CD4-positive, alpha-beta memory T cell (primary cell): ENCODE measurements at regions of chr5 and their contacts with region 1.

Region 1: DNA sequence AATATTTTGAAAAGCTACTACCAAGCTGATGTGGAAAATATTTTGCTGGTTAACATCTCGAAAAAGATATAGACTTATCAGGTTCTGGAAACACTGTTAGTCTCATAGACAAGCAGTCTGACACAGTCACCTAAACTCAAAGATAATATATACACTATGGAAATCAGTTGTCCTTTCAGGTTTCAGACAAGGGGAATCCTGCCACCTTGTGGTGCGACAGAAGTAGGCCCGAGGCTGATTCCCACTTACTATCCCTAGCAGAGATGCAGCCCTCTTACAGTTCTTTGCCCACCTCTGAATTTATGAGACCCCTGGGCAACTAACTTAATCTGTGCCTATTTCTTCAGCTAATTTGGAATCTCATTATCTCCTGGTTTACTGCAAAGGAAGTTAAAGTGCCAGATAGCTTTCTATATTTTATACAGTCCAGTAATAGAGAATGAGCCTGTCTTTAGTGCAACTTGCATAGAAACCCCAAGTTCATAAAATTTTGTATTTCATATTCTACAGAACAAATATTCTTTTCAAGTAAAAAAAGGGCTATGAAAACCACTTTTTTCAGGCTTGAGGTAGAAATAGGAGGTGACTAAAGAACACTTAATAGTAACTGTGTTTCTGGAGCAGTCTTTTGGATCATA is 16.9 kb downstream of the RAD1 start:
- DNase-seq: peak; percentile 49 to 57 (median 52)
- H3K4me3 ChIP-seq: no peak overlapping the region
- H3K4me3 Mint-ChIP-seq: no peak overlapping the region
- H3K27ac ChIP-seq: no peak overlapping the region
- H3K27ac Mint-ChIP-seq: no peak overlapping the region
- H3K4me1 ChIP-seq: no peaks in the 10 kb centered on the region
- H3K4me1 Mint-ChIP-seq: no peaks in the 10 kb centered on the region
- H3K27me3 ChIP-seq: no peaks in the 10 kb centered on the region
- H3K27me3 Mint-ChIP-seq: no peaks in the 10 kb centered on the region

Region 2: GRCh38 chr5:34452170-34452830 is 446.1 kb before region 1 on chr5:
- CTCF ChIA-PET with region 1: no interaction called
- POLR2A ChIA-PET with region 1: no interaction called
- intact Hi-C with region 1: no loop called
- DNase-seq: no peak
- H3K4me3 ChIP-seq: no peak overlapping the region
- H3K4me3 Mint-ChIP-seq: no peak overlapping the region
- H3K27ac ChIP-seq: no peak overlapping the region
- H3K27ac Mint-ChIP-seq: no peak overlapping the region
- H3K4me1 ChIP-seq: no peaks in the 10 kb centered on the region
- H3K4me1 Mint-ChIP-seq: no peaks in the 10 kb centered on the region
- H3K27me3 ChIP-seq: no peaks in the 10 kb centered on the region
- H3K27me3 Mint-ChIP-seq: peaks cover 16 to 19% of the 10 kb centered on the region in 2 donors

Region 3: GRCh38 chr5:34474573-34475021 is 423.8 kb before region 1 on chr5:
- CTCF ChIA-PET with region 1: interaction called, 15 read pairs
- POLR2A ChIA-PET with region 1: no interaction called
- intact Hi-C with region 1: loop called (anchors 1 kb)
- DNase-seq: peak in 4 of 5 donors; percentile 15 to 28 (median 24)
- H3K4me3 ChIP-seq: no peak overlapping the region
- H3K4me3 Mint-ChIP-seq: no peak overlapping the region
- H3K27ac ChIP-seq: no peak overlapping the region
- H3K27ac Mint-ChIP-seq: no peak overlapping the region
- H3K4me1 ChIP-seq: no peaks in the 10 kb centered on the region
- H3K4me1 Mint-ChIP-seq: peaks cover 0 to 2% (median 0%) of the 10 kb centered on the region in 4 donors
- H3K27me3 ChIP-seq: no peaks in the 10 kb centered on the region
- H3K27me3 Mint-ChIP-seq: peaks cover 7 to 13% of the 10 kb centered on the region in 2 donors

Region 4: DNA sequence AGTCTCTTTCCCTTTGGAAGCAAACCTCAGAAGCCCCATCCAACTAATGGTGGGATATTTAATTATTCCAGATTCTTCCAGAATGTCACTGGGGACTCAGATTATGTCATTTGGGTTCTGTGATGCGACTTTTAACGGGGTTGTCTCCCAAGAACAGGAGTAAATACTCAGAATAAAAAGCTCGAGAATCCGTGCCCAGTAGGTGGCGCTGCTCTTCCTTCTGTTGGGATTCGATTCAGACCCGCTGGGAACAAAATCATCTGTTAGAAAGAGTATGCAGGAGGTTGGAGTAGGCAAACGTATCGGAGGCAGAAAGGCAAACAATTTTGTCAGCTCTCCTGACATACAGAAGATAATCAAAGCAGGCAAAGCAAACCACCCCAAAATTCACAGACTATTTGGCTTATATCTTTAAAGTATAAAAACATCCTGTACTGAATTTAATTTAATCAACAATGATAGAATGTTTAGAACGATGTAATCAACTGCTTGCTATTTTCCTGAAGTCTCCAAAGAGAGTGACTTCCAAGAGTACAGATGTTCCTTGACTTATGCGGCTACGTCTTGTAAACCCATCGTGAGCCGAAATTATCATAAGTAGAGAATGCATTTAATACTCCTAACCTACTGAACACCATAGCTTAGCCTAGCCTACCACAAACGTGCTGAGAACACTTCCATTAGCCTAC is 412.1 kb before region 1 on chr5:
- CTCF ChIA-PET with region 1: interaction called, 34 read pairs
- POLR2A ChIA-PET with region 1: no interaction called
- intact Hi-C with region 1: loop called (anchors 1 kb)
- DNase-seq: peak in 4 of 5 donors; percentile 34 to 47 (median 42)
- H3K4me3 ChIP-seq: no peak overlapping the region
- H3K4me3 Mint-ChIP-seq: no peak overlapping the region
- H3K27ac ChIP-seq: no peak overlapping the region
- H3K27ac Mint-ChIP-seq: no peak overlapping the region
- H3K4me1 ChIP-seq: no peaks in the 10 kb centered on the region
- H3K4me1 Mint-ChIP-seq: peaks cover 3 to 5% (median 4%) of the 10 kb centered on the region in 4 donors
- H3K27me3 ChIP-seq: no peaks in the 10 kb centered on the region
- H3K27me3 Mint-ChIP-seq: peaks cover 17 to 30% of the 10 kb centered on the region in 2 donors

Region 5: DNA sequence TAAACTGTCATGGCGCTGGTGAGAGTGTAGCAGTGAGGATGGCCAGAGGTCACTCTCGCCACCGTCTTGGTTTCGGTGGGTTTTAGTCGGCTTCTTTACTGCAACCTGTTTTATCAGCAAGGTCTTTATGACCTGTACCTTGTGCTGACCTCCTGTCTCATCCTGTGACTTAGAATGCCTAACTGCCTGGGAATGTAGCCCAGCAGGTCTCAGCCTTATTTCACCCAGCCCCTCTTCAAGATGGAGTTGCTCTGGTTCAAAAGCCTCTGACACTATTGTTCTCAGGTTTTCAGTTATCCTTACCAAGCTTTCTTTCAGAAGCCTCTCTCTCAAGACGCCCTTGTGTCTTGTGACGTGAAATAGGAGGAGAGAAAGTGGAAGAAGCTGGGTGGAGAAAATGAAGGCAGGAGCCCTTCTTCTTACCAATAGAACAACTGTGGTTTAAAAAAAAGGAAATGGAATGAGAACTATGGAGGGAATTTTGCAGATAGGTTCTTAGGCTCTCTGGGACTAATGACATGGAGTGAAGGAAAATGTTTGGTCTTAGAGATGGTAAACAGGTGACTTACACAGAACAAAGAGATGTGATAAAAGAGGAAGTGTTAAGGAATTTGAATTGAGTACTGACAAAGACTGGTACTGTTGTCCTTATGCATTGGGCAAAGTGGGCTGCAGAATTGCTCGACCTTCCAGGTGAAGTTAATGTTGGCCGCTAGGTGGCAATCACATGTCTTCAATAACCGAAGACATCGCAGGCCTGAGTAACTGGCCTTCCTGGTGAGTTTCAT is 375.6 kb before region 1 on chr5:
- CTCF ChIA-PET with region 1: interaction called, 220 read pairs
- POLR2A ChIA-PET with region 1: interaction called, 3 read pairs
- intact Hi-C with region 1: no loop called
- DNase-seq: peak; percentile 33 to 50 (median 41)
- H3K4me3 ChIP-seq: no peak overlapping the region
- H3K4me3 Mint-ChIP-seq: no peak overlapping the region
- H3K27ac ChIP-seq: no peak overlapping the region
- H3K27ac Mint-ChIP-seq: no peak overlapping the region
- H3K4me1 ChIP-seq: no peaks in the 10 kb centered on the region
- H3K4me1 Mint-ChIP-seq: peaks cover 0 to 1% (median 0%) of the 10 kb centered on the region in 4 donors
- H3K27me3 ChIP-seq: no peaks in the 10 kb centered on the region
- H3K27me3 Mint-ChIP-seq: peaks cover 2 to 7% of the 10 kb centered on the region in 2 donors

Region 6: GRCh38 chr5:34886392-34887119 is 11.8 kb before region 1 on chr5:
- CTCF ChIA-PET with region 1: interaction called, 10 read pairs
- POLR2A ChIA-PET with region 1: no interaction called
- intact Hi-C with region 1: no loop called
- DNase-seq: no peak
- H3K4me3 ChIP-seq: no peak overlapping the region
- H3K4me3 Mint-ChIP-seq: no peak overlapping the region
- H3K27ac ChIP-seq: no peak overlapping the region
- H3K27ac Mint-ChIP-seq: no peak overlapping the region
- H3K4me1 ChIP-seq: no peaks in the 10 kb centered on the region
- H3K4me1 Mint-ChIP-seq: no peaks in the 10 kb centered on the region
- H3K27me3 ChIP-seq: no peaks in the 10 kb centered on the region
- H3K27me3 Mint-ChIP-seq: peaks cover 3 to 6% of the 10 kb centered on the region in 2 donors

Region 7: DNA sequence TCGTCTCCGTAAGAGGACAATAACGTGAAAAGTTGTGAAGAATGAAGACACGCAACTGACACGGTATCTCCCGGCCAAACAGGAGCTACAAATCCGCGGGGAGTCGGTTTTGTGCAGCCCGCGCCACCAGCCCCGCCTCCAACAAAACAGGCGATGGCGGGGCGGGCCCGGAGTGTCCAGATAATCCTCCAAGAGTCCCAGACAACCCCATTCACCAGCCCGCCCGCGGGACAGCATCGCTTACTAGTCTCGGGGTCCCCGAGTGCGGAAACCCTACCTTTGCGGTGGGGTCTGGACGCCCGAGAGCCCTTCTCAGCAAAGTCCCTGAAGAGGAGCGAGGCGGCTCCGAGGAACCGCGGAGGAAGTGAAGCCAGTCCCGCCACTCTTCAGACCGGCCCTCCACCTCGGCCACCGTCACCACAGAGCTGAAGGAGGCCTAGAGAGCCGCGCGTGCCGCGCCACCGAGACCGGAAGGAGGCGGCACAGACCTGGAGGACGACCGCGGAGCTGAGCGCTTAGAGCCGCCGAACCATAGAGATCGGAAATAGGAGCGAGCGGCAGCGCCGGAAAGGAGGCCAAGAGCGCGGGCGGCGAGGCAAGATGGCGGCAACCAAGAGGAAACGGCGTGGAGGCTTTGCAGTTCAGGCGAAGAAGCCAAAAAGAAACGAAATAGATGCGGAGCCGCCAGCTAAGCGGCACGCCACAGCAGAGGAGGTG is 16.9 kb after region 1 on chr5 and contains the starts of genes BRIX1 and RAD1:
- CTCF ChIA-PET with region 1: interaction called, 16 read pairs
- POLR2A ChIA-PET with region 1: interaction called, 3 read pairs
- intact Hi-C with region 1: no loop called
- DNase-seq: peak; percentile 92 to 94 (median 94)
- H3K4me3 ChIP-seq: peak within 1 kb of the TSS; percentile 84 to 95
- H3K4me3 Mint-ChIP-seq: peak within 1 kb of the TSS in 4 of 8 donors; percentile 52 to 69 (median 66)
- H3K27ac ChIP-seq: peak within 1 kb of the TSS; percentile 75
- H3K27ac Mint-ChIP-seq: peak within 1 kb of the TSS in 2 of 7 donors; percentile 68 to 81
- H3K4me1 ChIP-seq: peaks cover 40% of the 10 kb centered on the region
- H3K4me1 Mint-ChIP-seq: peaks cover 19 to 37% (median 24%) of the 10 kb centered on the region in 4 donors
- H3K27me3 ChIP-seq: no peaks in the 10 kb centered on the region
- H3K27me3 Mint-ChIP-seq: no peaks in the 10 kb centered on the region
- total RNA-seq, gene BRIX1: 27.1 to 30.9 TPM
- total RNA-seq, gene RAD1: 22.7 to 26.3 TPM